ENCODE measurements at regions of chr21 and their contacts with region 1.

Region 1: GRCh38 chr21:28294051-28294450 is 698.6 kb downstream of the LTN1 start:
- DNase-seq: peak; percentile 57
- H3K4me3 ChIP-seq: no peak overlapping the region
- H3K27ac ChIP-seq: peak overlapping the region; percentile 72
- H3K4me1 ChIP-seq: peaks cover 34% of the 10 kb centered on the region
- H3K27me3 ChIP-seq: no peaks in the 10 kb centered on the region
- CTCF ChIP-seq: no peak
- POLR2A ChIP-seq: no peak

Region 2: GRCh38 chr21:28089599-28090441 is 204.2 kb before region 1 on chr21:
- CTCF ChIA-PET with region 1: no interaction called
- POLR2A ChIA-PET with region 1: no interaction called
- dilution Hi-C with region 1: no loop called
- intact Hi-C with region 1: no loop called
- DNase-seq: no peak
- H3K4me3 ChIP-seq: no peak overlapping the region
- H3K27ac ChIP-seq: no peak overlapping the region
- H3K4me1 ChIP-seq: no peaks in the 10 kb centered on the region
- H3K27me3 ChIP-seq: no peaks in the 10 kb centered on the region
- CTCF ChIP-seq: no peak
- POLR2A ChIP-seq: no peak

Region 3: DNA sequence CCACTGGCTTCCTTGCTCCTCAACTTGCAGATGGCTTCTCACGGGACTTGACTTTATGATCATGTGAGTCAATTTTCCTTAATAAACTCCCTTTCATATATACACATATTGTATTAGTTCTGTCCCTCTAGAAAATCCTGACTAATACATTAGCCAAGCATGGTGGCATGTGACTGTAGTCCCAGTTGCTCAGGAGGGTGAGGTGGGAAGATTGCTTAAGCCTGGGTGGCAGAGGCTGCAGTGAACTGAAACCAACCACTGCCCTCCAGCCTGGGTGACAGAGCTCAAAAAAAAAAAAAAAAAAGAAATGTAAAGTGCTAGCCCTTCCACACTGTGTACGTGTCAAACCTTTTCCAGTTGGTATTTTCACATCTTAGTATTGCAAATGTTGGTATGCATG is 158.4 kb before region 1 on chr21:
- CTCF ChIA-PET with region 1: no interaction called
- POLR2A ChIA-PET with region 1: no interaction called
- dilution Hi-C with region 1: no loop called
- intact Hi-C with region 1: no loop called
- DNase-seq: no peak
- H3K4me3 ChIP-seq: no peak overlapping the region
- H3K27ac ChIP-seq: no peak overlapping the region
- H3K4me1 ChIP-seq: no peaks in the 10 kb centered on the region
- H3K27me3 ChIP-seq: no peaks in the 10 kb centered on the region
- CTCF ChIP-seq: no peak
- POLR2A ChIP-seq: no peak

Region 4: GRCh38 chr21:28229814-28230213 is 64.2 kb before region 1 on chr21:
- CTCF ChIA-PET with region 1: no interaction called
- POLR2A ChIA-PET with region 1: no interaction called
- dilution Hi-C with region 1: no loop called
- intact Hi-C with region 1: loop called (anchors 2 kb)
- DNase-seq: peak; percentile 37
- H3K4me3 ChIP-seq: no peak overlapping the region
- H3K27ac ChIP-seq: peak overlapping the region; percentile 55
- H3K4me1 ChIP-seq: peaks cover 18% of the 10 kb centered on the region
- H3K27me3 ChIP-seq: no peaks in the 10 kb centered on the region
- CTCF ChIP-seq: no peak
- POLR2A ChIP-seq: no peak

Region 5: DNA sequence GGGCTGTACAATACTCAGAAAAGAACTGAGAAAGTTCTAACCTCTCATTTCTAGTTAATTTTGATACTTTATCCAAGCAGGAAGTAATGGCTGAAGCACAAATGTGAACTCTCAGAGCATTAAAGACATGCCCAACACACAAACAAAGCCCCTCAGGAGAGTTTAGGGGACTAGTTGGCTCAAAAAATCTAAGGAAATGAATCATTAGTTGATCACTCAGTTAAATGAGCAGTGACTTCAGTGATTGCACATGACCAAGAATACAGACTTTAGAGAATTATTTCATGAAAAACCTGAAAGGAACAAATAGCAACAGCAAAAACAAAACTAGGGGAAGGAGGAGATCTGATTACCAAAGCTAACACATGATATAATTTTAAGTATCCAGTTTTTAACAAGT is 17.7 kb after region 1 on chr21:
- CTCF ChIA-PET with region 1: interaction called, 6 read pairs
- POLR2A ChIA-PET with region 1: no interaction called
- dilution Hi-C with region 1: no loop called
- intact Hi-C with region 1: loop called (anchors 2 kb)
- DNase-seq: peak; percentile 42
- H3K4me3 ChIP-seq: no peak overlapping the region
- H3K27ac ChIP-seq: peak overlapping the region; percentile 34
- H3K4me1 ChIP-seq: peaks cover 12% of the 10 kb centered on the region
- H3K27me3 ChIP-seq: no peaks in the 10 kb centered on the region
- CTCF ChIP-seq: no peak
- POLR2A ChIP-seq: no peak

Region 6: GRCh38 chr21:29748391-29749167 is 1454.5 kb after region 1 on chr21:
- CTCF ChIA-PET with region 1: no interaction called
- POLR2A ChIA-PET with region 1: no interaction called
- dilution Hi-C with region 1: no loop called
- intact Hi-C with region 1: no loop called
- DNase-seq: no peak
- H3K4me3 ChIP-seq: no peak overlapping the region
- H3K27ac ChIP-seq: no peak overlapping the region
- H3K4me1 ChIP-seq: no peaks in the 10 kb centered on the region
- H3K27me3 ChIP-seq: no peaks in the 10 kb centered on the region
- CTCF ChIP-seq: no peak
- POLR2A ChIP-seq: no peak

Measured in endothelial cell of umbilical vein (primary cell).